ENCODE measurements at regions of chr18 and their contacts with region 1.

Region 1: GRCh38 chr18:34122724-34123334 is 101.9 kb downstream of the NOL4 start:
- DNase-seq: peak; percentile 23
- H3K4me3 ChIP-seq: no peak overlapping the region
- H3K27ac ChIP-seq: no peak overlapping the region
- H3K4me1 ChIP-seq: peaks cover 0 to 3% (median 0%) of the 10 kb centered on the region in 4 donors
- H3K27me3 ChIP-seq: no peaks in the 10 kb centered on the region
- CTCF ChIP-seq: peak; percentile 79 to 89 (median 84)
- EP300 ChIP-seq: no peak
- POLR2A ChIP-seq: no peak

Region 2: GRCh38 chr18:32919799-32920198 is 1203.0 kb before region 1 on chr18:
- in situ Hi-C with region 1: no loop called
- intact Hi-C with region 1: no loop called
- DNase-seq: peak; percentile 8
- H3K4me3 ChIP-seq: no peak overlapping the region
- H3K27ac ChIP-seq: no peak overlapping the region
- H3K4me1 ChIP-seq: no peaks in the 10 kb centered on the region
- H3K27me3 ChIP-seq: no peaks in the 10 kb centered on the region
- CTCF ChIP-seq: peak in 2 of 5 experiments; percentile 4 to 6
- EP300 ChIP-seq: no peak
- POLR2A ChIP-seq: no peak

Region 3: GRCh38 chr18:34083910-34084535 is 38.8 kb before region 1 on chr18:
- in situ Hi-C with region 1: no loop called
- intact Hi-C with region 1: no loop called
- DNase-seq: no peak
- H3K4me3 ChIP-seq: no peak overlapping the region
- H3K27ac ChIP-seq: no peak overlapping the region
- H3K4me1 ChIP-seq: no peaks in the 10 kb centered on the region
- H3K27me3 ChIP-seq: no peaks in the 10 kb centered on the region
- CTCF ChIP-seq: no peak
- EP300 ChIP-seq: no peak
- POLR2A ChIP-seq: no peak

Region 4: GRCh38 chr18:34097312-34097711 is 25.5 kb before region 1 on chr18:
- in situ Hi-C with region 1: no loop called
- intact Hi-C with region 1: no loop called
- DNase-seq: no peak
- H3K4me3 ChIP-seq: no peak overlapping the region
- H3K27ac ChIP-seq: no peak overlapping the region
- H3K4me1 ChIP-seq: peaks cover 0 to 7% (median 2%) of the 10 kb centered on the region in 4 donors
- H3K27me3 ChIP-seq: no peaks in the 10 kb centered on the region
- CTCF ChIP-seq: no peak
- EP300 ChIP-seq: no peak
- POLR2A ChIP-seq: no peak

Region 5: GRCh38 chr18:34322365-34323289 is 199.8 kb after region 1 on chr18:
- in situ Hi-C with region 1: loop called in 1 of 4 experiments (anchors 10 kb)
- intact Hi-C with region 1: no loop called
- DNase-seq: peak; percentile 55
- H3K4me3 ChIP-seq: no peak overlapping the region
- H3K27ac ChIP-seq: no peak overlapping the region
- H3K4me1 ChIP-seq: peaks cover 0 to 6% (median 2%) of the 10 kb centered on the region in 4 donors
- H3K27me3 ChIP-seq: no peaks in the 10 kb centered on the region
- CTCF ChIP-seq: peak; percentile 56 to 67 (median 62)
- EP300 ChIP-seq: no peak
- POLR2A ChIP-seq: no peak

Measured in transverse colon (tissue), 4 donors.